WTC11 (cell line): ENCODE measurements at regions of chr3 and their contacts with region 1.

Region 1: DNA sequence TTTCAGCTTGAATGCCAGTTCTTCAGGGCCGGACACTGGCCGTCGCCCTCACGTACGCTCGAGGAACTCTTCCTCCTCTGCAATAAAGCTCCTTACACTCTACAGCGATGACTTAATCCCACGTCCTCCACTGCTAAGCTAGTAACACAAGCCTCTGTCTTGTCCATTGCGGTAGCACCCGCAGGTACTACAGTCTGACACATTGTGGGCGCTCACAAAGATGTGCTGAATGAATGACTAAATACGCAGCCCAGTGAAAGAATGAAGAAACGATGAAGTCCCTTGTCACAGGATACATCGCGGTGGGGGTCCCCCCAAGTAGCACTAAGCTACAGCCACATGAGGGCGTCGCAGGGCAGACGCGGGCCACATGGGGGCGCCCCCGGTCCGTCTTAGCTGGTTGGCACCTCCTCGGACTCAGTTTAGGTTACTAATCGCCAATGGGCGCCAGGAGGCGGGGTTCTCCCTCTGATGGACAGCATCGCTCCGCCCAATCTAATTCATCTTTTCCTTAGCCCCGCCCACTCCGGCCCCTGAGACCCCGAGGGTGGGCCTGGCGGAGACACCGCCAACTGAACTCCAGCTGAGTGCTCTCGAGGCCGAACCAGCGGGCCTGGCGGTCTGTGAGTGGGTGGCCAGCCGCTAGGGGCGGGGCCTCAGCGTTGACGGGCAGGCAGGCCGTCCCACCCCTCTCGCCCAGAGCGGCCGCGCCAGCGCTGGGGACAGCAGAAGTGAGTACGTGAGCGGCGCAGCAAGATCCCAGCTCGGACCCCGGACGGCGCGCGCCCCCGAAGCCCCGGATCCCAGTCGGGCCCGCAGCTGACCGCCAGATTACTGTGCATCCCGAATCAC is at the start of gene EPHB3:
- DNase-seq: peak; percentile 99
- ATAC-seq: peak; percentile 90
- H3K4me3 Mint-ChIP-seq: peak within 1 kb of the TSS; percentile 71
- H3K27ac Mint-ChIP-seq: no peak within 1 kb of the TSS
- H3K4me1 Mint-ChIP-seq: peaks cover 61% of the 10 kb centered on the region
- H3K27me3 Mint-ChIP-seq: peaks cover 87% of the 10 kb centered on the region
- CTCF ChIP-seq: peak; percentile 93
- total RNA-seq, gene EPHB3: 5.3 to 11.4 TPM (median 6.3 TPM) in 3 replicates

Region 2: DNA sequence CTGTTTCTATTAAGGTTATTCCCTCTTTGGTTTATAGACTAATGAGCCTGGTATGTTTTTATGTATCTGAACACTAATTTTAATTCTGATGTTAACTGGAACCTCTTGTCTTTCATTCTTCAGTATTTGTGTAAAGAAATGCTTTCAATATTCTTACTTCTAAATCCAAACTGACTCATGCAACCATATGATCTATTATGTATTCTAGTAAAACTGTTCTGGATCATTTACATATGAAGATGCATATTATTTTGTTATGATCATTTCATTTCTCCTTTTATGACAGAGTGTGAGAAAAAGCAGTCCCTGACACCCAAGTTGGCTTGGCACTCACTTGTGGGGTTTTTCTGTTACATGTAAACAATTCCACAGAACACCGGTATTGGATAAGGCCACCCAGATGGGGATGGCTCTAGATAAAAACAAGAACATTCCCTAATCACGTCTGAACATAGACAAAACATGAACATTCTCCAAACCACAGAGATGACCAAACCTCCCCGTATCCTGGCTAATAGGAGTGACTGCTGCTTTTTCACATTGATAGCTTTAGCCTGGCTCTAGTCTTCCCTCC is 71.9 kb before region 1 on chr3:
- CTCF ChIA-PET with region 1: no interaction called
- POLR2A ChIA-PET with region 1: no interaction called
- DNase-seq: no peak
- ATAC-seq: no peak
- H3K4me3 Mint-ChIP-seq: no peak overlapping the region
- H3K27ac Mint-ChIP-seq: no peak overlapping the region
- H3K4me1 Mint-ChIP-seq: peaks cover 3% of the 10 kb centered on the region; the same call in 1 of the 2 replicates
- H3K27me3 Mint-ChIP-seq: peaks cover 62% of the 10 kb centered on the region
- CTCF ChIP-seq: no peak

Region 3: DNA sequence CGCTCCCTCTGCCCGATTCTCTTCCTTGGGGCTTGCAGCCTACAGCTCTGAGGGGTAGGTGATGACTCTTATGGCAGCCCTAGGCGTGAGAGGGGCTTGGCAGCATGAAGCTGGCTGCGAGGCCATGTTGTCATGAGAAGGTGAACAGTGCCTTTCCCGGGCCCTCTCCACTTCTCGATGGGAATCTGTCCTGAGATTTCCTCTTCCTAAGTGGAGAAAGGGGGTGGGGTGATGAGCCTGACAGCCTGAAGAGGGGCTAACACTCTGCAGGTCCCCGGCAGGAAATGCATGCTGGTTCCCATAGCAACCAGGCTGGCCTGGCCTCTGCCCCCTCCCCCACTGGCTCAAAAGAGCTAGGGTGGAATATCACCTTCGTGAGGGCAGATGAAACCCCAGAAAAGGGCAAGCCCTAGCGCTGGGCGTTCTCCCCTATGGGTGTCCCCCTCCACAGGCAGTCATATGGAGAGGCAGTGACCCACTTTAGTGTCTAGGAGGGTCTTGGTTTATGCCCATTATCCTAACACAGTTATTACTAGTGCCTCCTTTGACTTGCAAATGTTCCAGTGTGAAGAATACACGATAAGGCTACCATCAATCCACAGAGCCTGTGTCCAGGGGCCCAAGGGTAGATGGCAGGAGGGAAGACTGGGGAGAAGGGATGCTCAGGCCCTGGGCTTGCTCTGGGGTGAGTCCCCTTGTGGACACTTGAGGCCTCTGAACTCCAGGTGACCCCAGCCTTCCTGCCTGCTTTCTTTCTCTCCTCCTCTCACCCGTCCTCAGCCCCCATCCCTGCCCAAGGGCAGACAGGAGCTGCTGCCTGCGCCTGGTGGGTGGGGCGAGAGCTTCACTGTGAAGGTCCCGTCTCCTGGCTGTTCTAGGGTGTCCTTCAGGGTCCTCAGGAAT is 13.5 kb after region 1 on chr3:
- CTCF ChIA-PET with region 1: interaction called, 37 read pairs
- POLR2A ChIA-PET with region 1: interaction called, 5 read pairs
- DNase-seq: peak; percentile 82
- ATAC-seq: peak; percentile 82
- H3K4me3 Mint-ChIP-seq: peak overlapping the region; percentile 45
- H3K27ac Mint-ChIP-seq: no peak overlapping the region
- H3K4me1 Mint-ChIP-seq: peaks cover 61% of the 10 kb centered on the region
- H3K27me3 Mint-ChIP-seq: peaks cover 45% of the 10 kb centered on the region
- CTCF ChIP-seq: no peak

Region 4: DNA sequence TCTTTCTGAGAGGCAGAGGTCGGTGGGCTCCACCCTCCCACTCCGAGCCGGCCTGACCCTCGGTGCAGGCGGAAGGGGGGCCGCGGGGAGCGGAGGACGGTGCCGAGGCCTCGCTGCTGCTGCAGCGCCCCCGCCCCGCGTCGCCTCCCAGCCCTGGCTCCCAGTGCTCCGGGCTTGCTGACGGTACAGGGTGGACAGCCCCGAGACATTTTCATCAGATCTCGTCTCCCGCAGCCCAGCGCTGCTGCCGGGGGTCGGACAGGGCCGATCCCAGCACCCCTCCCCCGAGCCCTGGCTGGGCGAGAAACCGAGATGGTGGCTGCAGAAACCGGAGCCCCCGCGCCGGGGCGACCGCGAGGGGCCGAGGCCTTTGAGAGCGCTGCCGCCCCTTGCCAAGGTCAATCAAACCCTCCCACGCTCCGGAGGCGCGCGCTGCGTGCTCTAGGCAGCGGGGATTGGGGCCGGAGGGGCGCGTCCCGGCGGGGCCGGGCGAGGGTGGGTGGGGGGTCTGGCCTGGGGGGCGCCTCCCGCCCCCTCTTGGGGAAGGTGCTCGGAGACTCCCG is 42.8 kb after region 1 on chr3:
- CTCF ChIA-PET with region 1: interaction called, 78 read pairs
- POLR2A ChIA-PET with region 1: interaction called, 4 read pairs
- DNase-seq: peak; percentile 55
- ATAC-seq: peak; percentile 27
- H3K4me3 Mint-ChIP-seq: peak overlapping the region; percentile 71
- H3K27ac Mint-ChIP-seq: no peak overlapping the region
- H3K4me1 Mint-ChIP-seq: peaks cover 37% of the 10 kb centered on the region
- H3K27me3 Mint-ChIP-seq: peaks cover 92% of the 10 kb centered on the region
- CTCF ChIP-seq: no peak

Region 5: DNA sequence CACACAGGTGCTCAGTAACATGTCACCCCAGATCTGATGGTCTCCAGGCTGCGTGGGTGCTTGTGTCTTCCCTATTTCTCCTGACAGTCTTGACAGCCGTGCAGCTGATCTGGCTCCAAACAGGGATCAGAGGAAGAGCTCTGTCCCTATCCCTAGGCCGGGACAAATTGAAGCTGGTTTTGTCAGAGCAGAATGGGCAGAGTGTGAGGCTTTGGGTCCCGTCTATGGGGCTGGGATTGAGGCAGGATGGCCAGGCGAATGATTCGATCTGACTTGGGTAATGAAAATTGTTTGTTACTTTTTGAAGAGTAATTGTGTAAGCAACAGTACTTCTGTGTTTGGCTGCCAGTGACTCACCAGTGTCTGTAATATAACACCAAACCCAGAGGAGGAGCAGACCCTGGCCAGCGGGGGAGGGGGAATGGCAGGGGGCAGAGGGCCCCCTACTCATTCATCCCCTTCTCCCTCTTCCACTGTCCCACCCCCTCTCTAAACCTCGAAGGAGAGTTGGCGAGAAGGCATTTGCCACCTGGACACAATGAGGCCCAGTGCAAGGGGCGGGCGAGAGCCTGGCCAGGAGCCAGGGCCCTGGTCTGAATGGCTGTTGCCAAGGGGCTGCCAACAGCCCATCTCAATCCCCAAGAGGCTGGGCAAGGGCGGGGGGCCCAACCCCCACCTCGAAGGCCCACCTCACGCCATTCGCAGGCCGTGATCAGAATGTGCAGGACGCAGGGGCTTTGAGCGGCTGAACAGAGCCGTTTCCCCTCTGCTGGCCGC is 155.5 kb after region 1 on chr3:
- CTCF ChIA-PET with region 1: interaction called, 21 read pairs
- POLR2A ChIA-PET with region 1: interaction called, 4 read pairs
- DNase-seq: peak; percentile 39
- ATAC-seq: peak; percentile 62
- H3K4me3 Mint-ChIP-seq: peak overlapping the region; percentile 29; the same call in 1 of the 2 replicates
- H3K27ac Mint-ChIP-seq: peak overlapping the region; percentile 43
- H3K4me1 Mint-ChIP-seq: peaks cover 42% of the 10 kb centered on the region
- H3K27me3 Mint-ChIP-seq: no peaks in the 10 kb centered on the region; the same call in 1 of the 2 replicates
- CTCF ChIP-seq: no peak

Region 6: GRCh38 chr3:184771301-184772127 is 210.2 kb after region 1 on chr3:
- CTCF ChIA-PET with region 1: interaction called, 13 read pairs
- POLR2A ChIA-PET with region 1: no interaction called
- DNase-seq: no peak
- ATAC-seq: no peak
- H3K4me3 Mint-ChIP-seq: no peak overlapping the region
- H3K27ac Mint-ChIP-seq: no peak overlapping the region
- H3K4me1 Mint-ChIP-seq: peaks cover 31% of the 10 kb centered on the region
- H3K27me3 Mint-ChIP-seq: no peaks in the 10 kb centered on the region
- CTCF ChIP-seq: no peak

Region 7: GRCh38 chr3:184805351-184806038 is 244.2 kb after region 1 on chr3:
- CTCF ChIA-PET with region 1: interaction called, 17 read pairs
- POLR2A ChIA-PET with region 1: no interaction called
- DNase-seq: no peak
- ATAC-seq: no peak
- H3K4me3 Mint-ChIP-seq: no peak overlapping the region
- H3K27ac Mint-ChIP-seq: no peak overlapping the region
- H3K4me1 Mint-ChIP-seq: no peaks in the 10 kb centered on the region
- H3K27me3 Mint-ChIP-seq: no peaks in the 10 kb centered on the region
- CTCF ChIP-seq: no peak

Region 8: GRCh38 chr3:184918741-184919140 is 357.5 kb after region 1 on chr3:
- CTCF ChIA-PET with region 1: no interaction called
- POLR2A ChIA-PET with region 1: no interaction called
- DNase-seq: no peak
- ATAC-seq: peak; percentile 80
- H3K4me3 Mint-ChIP-seq: peak overlapping the region; percentile 9; the same call in 1 of the 2 replicates
- H3K27ac Mint-ChIP-seq: peak overlapping the region; percentile 81
- H3K4me1 Mint-ChIP-seq: peaks cover 42% of the 10 kb centered on the region
- H3K27me3 Mint-ChIP-seq: no peaks in the 10 kb centered on the region
- CTCF ChIP-seq: no peak